Testis (tissue), 5 donors: ENCODE measurements at regions of chr1 and their contacts with region 1.

Region 1: GRCh38 chr1:67489643-67490042 is 59.4 kb upstream of the SERBP1 start:
- DNase-seq: no peak
- H3K4me3 ChIP-seq: no peak overlapping the region
- H3K27ac ChIP-seq: no peak overlapping the region
- H3K4me1 ChIP-seq: no peaks in the 10 kb centered on the region
- H3K27me3 ChIP-seq: no peaks in the 10 kb centered on the region
- CTCF ChIP-seq: no peak
- POLR2A ChIP-seq: no peak

Region 2: GRCh38 chr1:67230539-67230938 is 259.1 kb before region 1 on chr1:
- intact Hi-C with region 1: loop called (anchors 10 kb)
- DNase-seq: no peak
- H3K4me3 ChIP-seq: no peak overlapping the region
- H3K27ac ChIP-seq: no peak overlapping the region
- H3K4me1 ChIP-seq: no peaks in the 10 kb centered on the region
- H3K27me3 ChIP-seq: no peaks in the 10 kb centered on the region
- CTCF ChIP-seq: no peak
- POLR2A ChIP-seq: no peak